Psoas muscle (tissue), 8 donors: ENCODE measurements at regions of chr10 and their contacts with region 1.

Region 1: DNA sequence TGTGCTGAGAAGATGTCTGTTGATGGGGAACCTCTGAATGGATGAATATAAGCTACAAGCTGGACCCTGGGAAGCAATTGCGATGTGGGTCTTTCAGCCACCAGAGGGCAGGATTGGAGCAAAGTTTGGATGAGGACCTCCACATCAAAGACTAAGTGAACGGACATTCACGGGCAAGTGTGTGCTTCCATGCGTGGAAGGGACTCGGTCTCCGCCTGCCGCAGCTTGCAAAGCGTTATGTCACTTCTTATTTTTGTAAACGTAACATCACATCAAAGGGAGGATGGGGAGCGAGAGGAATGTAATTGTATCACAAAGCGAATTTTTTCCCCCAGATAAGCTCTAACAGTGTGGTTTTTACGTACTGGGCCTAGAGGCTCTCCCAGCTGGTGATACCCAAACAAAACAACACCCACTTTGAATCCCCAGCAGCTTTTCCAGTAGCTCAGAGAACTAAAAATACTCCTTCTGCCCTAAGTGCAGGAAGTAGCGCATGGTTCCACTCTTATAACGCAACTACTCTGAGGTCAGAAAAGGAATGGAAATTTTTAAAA is 65.0 kb downstream of the VWA2 start:
- DNase-seq: peak; percentile 72 to 79
- ATAC-seq: peak; percentile 76 to 92 (median 86)
- H3K4me3 ChIP-seq: peak overlapping the region; percentile 49
- H3K27ac ChIP-seq: no peak overlapping the region
- H3K4me1 ChIP-seq: peaks cover 4% of the 10 kb centered on the region
- H3K27me3 ChIP-seq: no peaks in the 10 kb centered on the region
- CTCF ChIP-seq: peak; percentile 79

Region 2: DNA sequence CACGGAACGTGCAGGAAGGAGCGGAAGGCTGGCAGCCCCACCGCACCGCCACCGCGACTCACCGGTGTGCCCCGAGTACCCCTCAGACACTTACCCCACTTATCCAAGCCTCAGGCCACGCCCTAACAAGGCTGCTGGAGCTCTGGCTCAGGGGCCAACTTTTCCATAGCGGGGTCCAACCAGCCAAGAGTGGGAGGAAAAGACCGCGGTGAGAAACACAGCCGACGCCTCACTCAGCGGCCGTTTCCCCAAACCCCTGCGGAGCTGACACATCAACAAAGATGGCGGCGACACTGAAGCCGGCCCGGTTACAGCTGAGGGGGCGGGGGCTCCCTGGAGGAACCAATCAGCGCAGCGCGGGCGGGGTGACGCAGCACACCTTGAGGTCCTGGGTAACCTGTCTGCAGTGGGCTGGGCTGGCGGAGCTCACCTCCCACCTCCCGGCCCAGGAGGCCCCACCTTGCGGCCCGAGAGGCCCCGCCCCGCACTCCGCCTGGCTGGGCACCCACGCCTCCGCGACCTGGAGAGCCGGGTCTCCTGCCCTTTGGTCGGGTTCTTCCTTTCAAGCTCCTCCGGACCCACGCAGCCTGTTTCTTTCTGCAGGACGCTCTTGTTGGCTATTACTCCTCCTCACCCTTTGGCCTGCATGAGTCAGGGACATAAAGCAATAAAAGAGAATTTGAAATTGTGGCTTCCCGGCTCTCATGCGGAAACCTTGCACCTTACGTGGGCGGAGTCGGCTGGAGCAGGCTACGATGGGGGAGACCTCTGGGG is 130.0 kb before region 1 on chr10 and contains the start of gene CCDC186:
- intact Hi-C with region 1: no loop called
- DNase-seq: peak; percentile 94 to 96
- ATAC-seq: peak; percentile 98 to 99 (median 99)
- H3K4me3 ChIP-seq: peak within 1 kb of the TSS; percentile 88
- H3K27ac ChIP-seq: peak within 1 kb of the TSS; percentile 93
- H3K4me1 ChIP-seq: peaks cover 7% of the 10 kb centered on the region
- H3K27me3 ChIP-seq: no peaks in the 10 kb centered on the region
- CTCF ChIP-seq: no peak
- total RNA-seq, gene CCDC186: 10.5 to 16.5 (median 11.4) TPM

Region 3: DNA sequence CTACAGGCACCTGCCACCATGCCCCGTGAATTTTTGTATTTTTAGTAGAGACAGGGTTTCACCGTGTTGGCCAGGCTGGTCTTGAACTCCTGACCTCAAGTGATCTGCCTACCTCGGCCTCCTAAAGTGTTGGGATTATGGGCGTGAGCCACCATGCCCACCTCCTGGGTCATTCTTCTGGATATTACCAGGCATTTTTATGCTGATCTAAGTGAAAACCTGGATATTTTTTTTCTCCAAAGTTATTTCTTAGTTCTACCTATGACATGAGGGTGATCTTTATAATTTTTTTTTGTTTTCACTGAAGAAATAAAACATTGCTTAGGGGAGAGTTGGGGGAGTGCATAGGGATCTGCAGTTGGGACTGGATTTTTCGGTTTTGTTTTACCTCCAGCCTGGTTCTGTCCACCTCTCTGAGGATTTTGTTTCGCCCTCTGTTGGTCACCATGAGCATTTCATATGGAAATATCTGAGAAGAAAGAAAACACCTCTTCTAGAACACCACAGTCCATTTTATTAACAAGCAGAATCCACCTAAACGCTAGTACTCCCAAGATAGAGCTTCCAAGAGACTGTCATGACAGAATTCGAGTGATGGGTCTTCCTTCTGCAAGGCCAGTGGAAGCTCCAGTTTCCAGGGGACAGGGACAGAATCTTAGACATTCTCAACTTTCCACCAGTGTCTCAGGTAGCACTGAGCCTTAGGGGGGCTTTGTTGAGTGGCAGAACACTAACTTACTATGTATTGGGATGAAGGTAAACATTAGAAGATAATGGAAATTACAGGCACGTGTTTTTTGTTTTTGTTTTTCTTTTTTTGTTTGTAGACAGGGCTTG is 133.6 kb after region 1 on chr10:
- intact Hi-C with region 1: loop called (anchors 5 to 10 kb)
- DNase-seq: no peak
- ATAC-seq: no peak
- H3K4me3 ChIP-seq: no peak overlapping the region
- H3K27ac ChIP-seq: no peak overlapping the region
- H3K4me1 ChIP-seq: no peaks in the 10 kb centered on the region
- H3K27me3 ChIP-seq: no peaks in the 10 kb centered on the region
- CTCF ChIP-seq: peak; percentile 36

Region 4: DNA sequence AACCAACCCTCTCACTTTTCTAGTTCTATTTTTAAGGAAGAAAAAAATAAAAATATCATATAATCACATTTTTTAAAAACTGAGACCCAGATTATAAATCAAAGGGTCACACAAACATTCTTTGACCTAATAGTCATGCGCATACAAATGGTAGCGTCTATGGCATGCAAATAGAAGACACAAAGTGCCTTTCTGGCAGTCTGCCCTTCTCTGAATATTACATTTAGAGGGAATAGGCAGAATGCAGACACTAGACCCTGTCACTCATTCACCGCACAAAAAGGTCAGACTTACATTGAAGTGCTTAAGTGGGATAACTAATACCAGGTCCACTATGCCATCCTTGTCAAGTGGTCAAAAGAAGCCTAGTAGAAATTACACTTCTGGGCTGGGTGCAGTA is 490.9 kb after region 1 on chr10:
- intact Hi-C with region 1: loop called in 1 of 2 experiments (anchors 10 kb)
- DNase-seq: no peak
- ATAC-seq: no peak
- H3K4me3 ChIP-seq: no peak overlapping the region
- H3K27ac ChIP-seq: no peak overlapping the region
- H3K4me1 ChIP-seq: no peaks in the 10 kb centered on the region
- H3K27me3 ChIP-seq: no peaks in the 10 kb centered on the region
- CTCF ChIP-seq: no peak

Region 5: GRCh38 chr10:114810926-114811325 is 506.8 kb after region 1 on chr10:
- intact Hi-C with region 1: loop called in 1 of 2 experiments (anchors 10 kb)
- DNase-seq: no peak
- ATAC-seq: no peak
- H3K4me3 ChIP-seq: no peak overlapping the region
- H3K27ac ChIP-seq: no peak overlapping the region
- H3K4me1 ChIP-seq: no peaks in the 10 kb centered on the region
- H3K27me3 ChIP-seq: peaks cover 0 to 2% (median 0%) of the 10 kb centered on the region in 3 donors
- CTCF ChIP-seq: no peak